Tibial artery (tissue), 4 donors: ENCODE measurements at regions of chr1 and their contacts with region 1.

Region 1: DNA sequence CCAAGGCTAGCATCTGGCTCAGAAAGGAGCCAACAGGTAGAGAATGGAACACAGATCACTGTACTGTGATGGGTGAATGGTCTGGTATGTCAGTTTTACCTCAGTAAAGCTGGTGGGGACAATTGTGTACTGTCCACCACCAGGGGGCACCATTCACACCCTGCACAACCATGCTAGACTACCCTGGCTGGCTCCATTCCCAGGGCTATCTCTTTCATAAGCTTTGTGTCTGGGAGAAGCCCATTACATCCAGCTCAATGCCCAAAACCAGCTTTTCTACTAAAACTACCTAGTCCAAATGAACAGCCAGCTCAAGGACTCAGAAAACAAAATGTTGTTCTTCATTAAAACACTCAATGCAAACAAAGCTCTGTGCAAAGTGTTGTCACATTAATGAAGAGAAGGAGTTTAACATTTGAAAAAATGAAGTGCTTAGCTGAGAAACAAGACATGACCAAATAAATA is 62.0 kb upstream of the RASAL2 start:
- DNase-seq: peak; percentile 93 to 96
- H3K4me3 ChIP-seq: no peak overlapping the region
- H3K27ac ChIP-seq: no peak overlapping the region
- H3K4me1 ChIP-seq: peaks cover 0 to 6% (median 0%) of the 10 kb centered on the region in 4 donors
- H3K27me3 ChIP-seq: no peaks in the 10 kb centered on the region
- CTCF ChIP-seq: peak; percentile 84 to 85

Region 2: GRCh38 chr1:178294654-178295053 is 262.8 kb after region 1 on chr1:
- intact Hi-C with region 1: loop called (anchors 5 kb)
- DNase-seq: no peak
- H3K4me3 ChIP-seq: no peak overlapping the region
- H3K27ac ChIP-seq: no peak overlapping the region
- H3K4me1 ChIP-seq: peaks cover 0 to 5% (median 0%) of the 10 kb centered on the region in 4 donors
- H3K27me3 ChIP-seq: no peaks in the 10 kb centered on the region
- CTCF ChIP-seq: no peak